A673 (cell line): ENCODE measurements at regions of chr6 and their contacts with region 1.

Region 1: GRCh38 chr6:1630771-1631217 is 21.1 kb downstream of the FOXC1 start:
- DNase-seq: no peak
- H3K4me3 ChIP-seq: no peak overlapping the region
- H3K27ac ChIP-seq: no peak overlapping the region
- H3K4me1 ChIP-seq: peaks cover 6% of the 10 kb centered on the region
- H3K27me3 ChIP-seq: peaks cover 36% of the 10 kb centered on the region
- CTCF ChIP-seq: no peak

Region 2: GRCh38 chr6:1836690-1837089 is 205.9 kb after region 1 on chr6:
- CTCF ChIA-PET with region 1: no interaction called
- POLR2A ChIA-PET with region 1: interaction called, 16 read pairs
- intact Hi-C with region 1: no loop called
- DNase-seq: no peak
- H3K4me3 ChIP-seq: no peak overlapping the region
- H3K27ac ChIP-seq: no peak overlapping the region
- H3K4me1 ChIP-seq: peaks cover 29% of the 10 kb centered on the region
- H3K27me3 ChIP-seq: no peaks in the 10 kb centered on the region
- CTCF ChIP-seq: no peak

Region 3: GRCh38 chr6:2081155-2082138 is 450.7 kb after region 1 on chr6:
- CTCF ChIA-PET with region 1: no interaction called
- POLR2A ChIA-PET with region 1: no interaction called
- intact Hi-C with region 1: no loop called
- DNase-seq: no peak
- H3K4me3 ChIP-seq: no peak overlapping the region
- H3K27ac ChIP-seq: no peak overlapping the region
- H3K4me1 ChIP-seq: no peaks in the 10 kb centered on the region
- H3K27me3 ChIP-seq: no peaks in the 10 kb centered on the region
- CTCF ChIP-seq: no peak